ENCODE measurements at regions of chr10 and their contacts with region 1.

Region 1: DNA sequence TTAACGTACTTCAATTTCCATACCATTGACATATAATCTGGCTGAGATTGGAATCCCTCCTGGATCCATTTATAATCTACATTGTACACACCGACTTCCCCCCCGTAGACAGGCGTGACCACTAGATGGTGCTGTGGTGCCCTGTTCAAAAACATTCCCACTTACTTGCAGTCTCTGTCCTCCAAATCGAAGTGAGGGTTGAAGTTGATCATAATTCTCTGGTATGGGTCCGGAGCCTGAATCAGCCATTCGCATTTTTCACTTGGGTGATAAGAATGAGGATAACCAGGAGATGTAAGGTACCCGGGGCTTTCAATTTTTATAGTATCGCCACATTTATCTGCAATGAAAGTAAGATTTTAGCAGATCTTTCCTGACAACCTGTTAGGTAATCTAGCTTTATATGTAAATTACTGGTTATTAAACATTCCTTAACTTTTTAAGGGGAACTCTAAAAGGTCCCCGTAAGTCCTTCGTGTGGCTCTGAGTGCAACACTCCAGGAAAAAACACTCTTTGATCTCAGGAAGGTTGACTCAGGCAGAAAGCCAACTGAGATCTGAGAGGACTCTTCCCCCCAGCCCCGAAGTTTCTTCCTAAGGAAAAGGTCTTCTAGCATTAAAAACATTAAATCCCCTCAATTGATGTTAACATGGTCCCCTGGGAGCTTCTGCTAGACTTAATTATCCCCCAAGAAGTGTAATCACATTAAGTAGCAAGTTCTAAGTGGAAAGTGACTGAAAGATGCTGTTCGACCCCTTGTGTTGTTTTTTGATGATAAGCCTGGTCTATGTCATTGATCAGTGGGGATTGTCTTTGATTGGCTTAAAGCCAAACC is 3.7 kb downstream of the NRP1 start:
- DNase-seq: peak; percentile 64
- ATAC-seq: peak; percentile 56
- H3K4me3 ChIP-seq: no peak overlapping the region
- H3K27ac ChIP-seq: no peak overlapping the region
- H3K4me1 ChIP-seq: peaks cover 2 to 27% of the 10 kb centered on the region in 2 experiments; a peak in 3 of 4 replicates
- H3K27me3 ChIP-seq: peaks cover 13% of the 10 kb centered on the region; the same call in 1 of the 2 replicates
- CTCF ChIP-seq: peak; percentile 66 to 97 (median 86)
- POLR2A ChIP-seq: no peak
- RAD21 ChIP-seq: peak; percentile 89

Region 2: GRCh38 chr10:33193057-33193700 is 137.6 kb before region 1 on chr10:
- CTCF ChIA-PET with region 1: no interaction called
- POLR2A ChIA-PET with region 1: no interaction called
- RAD21 ChIA-PET with region 1: no interaction called
- intact Hi-C with region 1: loop called (anchors 10 kb)
- DNase-seq: peak; percentile 78
- ATAC-seq: peak; percentile 99
- H3K4me3 ChIP-seq: peak overlapping the region in 1 of 2 experiments; percentile 11; a peak in 1 of 4 replicates
- H3K27ac ChIP-seq: no peak overlapping the region
- H3K4me1 ChIP-seq: peaks cover 0 to 4% of the 10 kb centered on the region in 2 experiments; a peak in 1 of 4 replicates
- H3K27me3 ChIP-seq: no peaks in the 10 kb centered on the region
- CTCF ChIP-seq: peak; percentile 64 to 87 (median 81); a peak in 5 of 6 replicates
- POLR2A ChIP-seq: no peak
- RAD21 ChIP-seq: peak; percentile 89

Region 3: GRCh38 chr10:34081948-34082347 is 751.2 kb after region 1 on chr10:
- CTCF ChIA-PET with region 1: no interaction called
- POLR2A ChIA-PET with region 1: no interaction called
- RAD21 ChIA-PET with region 1: no interaction called
- intact Hi-C with region 1: loop called (anchors 10 kb)
- DNase-seq: no peak
- ATAC-seq: peak; percentile 47; the same call in 1 of the 2 replicates
- H3K4me3 ChIP-seq: no peak overlapping the region
- H3K27ac ChIP-seq: no peak overlapping the region
- H3K4me1 ChIP-seq: no peaks in the 10 kb centered on the region
- H3K27me3 ChIP-seq: no peaks in the 10 kb centered on the region
- CTCF ChIP-seq: peak; percentile 21 to 46 (median 39); a peak in 5 of 6 replicates
- POLR2A ChIP-seq: no peak
- RAD21 ChIP-seq: peak; percentile 52

Region 4: DNA sequence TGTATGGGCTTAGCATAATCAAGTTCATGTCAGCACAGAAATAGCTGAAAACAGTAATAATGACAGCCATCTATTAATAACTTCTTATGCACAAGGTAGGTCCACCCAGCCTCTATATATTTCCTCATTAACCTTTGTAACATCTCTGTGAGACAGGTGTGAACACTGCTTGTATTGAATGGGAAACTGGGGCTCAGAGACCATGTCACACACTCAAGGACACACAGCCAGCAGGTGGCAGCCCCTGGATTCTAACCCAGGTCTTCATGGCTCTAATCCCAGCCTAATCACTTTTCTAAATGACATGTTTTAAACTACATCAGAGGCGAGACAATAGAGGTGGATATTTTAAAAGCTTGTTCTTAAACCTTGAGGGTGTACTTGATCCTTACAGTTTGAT is 892.9 kb after region 1 on chr10:
- CTCF ChIA-PET with region 1: no interaction called
- POLR2A ChIA-PET with region 1: no interaction called
- RAD21 ChIA-PET with region 1: no interaction called
- intact Hi-C with region 1: loop called (anchors 10 kb)
- DNase-seq: no peak
- ATAC-seq: no peak
- H3K4me3 ChIP-seq: no peak overlapping the region
- H3K27ac ChIP-seq: no peak overlapping the region
- H3K4me1 ChIP-seq: peaks cover 2 to 6% of the 10 kb centered on the region in 2 experiments; a peak in 1 of 4 replicates
- H3K27me3 ChIP-seq: no peaks in the 10 kb centered on the region
- CTCF ChIP-seq: 0 out of 6 replicates have a peak, but pooled peaks of 1 of the 3 experiments have one; percentile 8
- POLR2A ChIP-seq: no peak
- RAD21 ChIP-seq: peak; percentile 29

Measured in HCT116 (cell line).